ENCODE measurements at regions of chr1 and their contacts with region 1.

Region 1: DNA sequence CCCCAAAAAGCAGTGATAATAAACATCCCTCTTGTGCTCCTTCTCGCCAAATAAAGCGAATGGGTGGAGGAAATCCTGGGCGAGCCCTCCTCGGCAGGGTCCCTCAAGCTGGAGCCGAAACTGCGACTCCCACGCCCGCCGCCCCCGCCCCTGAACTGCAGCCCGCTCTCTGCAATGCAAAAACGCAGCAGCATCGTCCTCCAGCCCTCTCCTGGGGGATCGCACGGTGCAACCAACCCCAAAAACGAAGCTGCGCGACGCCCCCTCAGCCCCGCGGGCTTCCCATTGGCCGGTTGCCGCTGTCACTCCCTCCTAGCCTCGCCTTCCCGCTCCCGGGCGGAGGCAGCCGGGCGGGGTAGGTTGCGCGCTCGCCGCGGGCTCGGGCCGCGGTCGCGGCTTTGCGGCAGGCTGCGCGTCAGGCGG is at the start of gene TMCC2:
- DNase-seq: peak; percentile 91
- H3K4me3 Mint-ChIP-seq: peak within 1 kb of the TSS; percentile 63
- H3K27ac Mint-ChIP-seq: no peak within 1 kb of the TSS
- H3K4me1 Mint-ChIP-seq: peaks cover 20% of the 10 kb centered on the region
- H3K27me3 Mint-ChIP-seq: no peaks in the 10 kb centered on the region
- CTCF ChIP-seq: no peak
- total RNA-seq, gene TMCC2: 0.54 and 0.79 TPM in 2 replicates

Region 2: GRCh38 chr1:205172729-205173366 is 54.7 kb before region 1 on chr1:
- CTCF ChIA-PET with region 1: interaction called, 15 read pairs
- POLR2A ChIA-PET with region 1: interaction called, 16 read pairs
- intact Hi-C with region 1: loop called (anchors 1 kb)
- DNase-seq: peak; percentile 93
- H3K4me3 Mint-ChIP-seq: no peak overlapping the region
- H3K27ac Mint-ChIP-seq: peak overlapping the region; percentile 95
- H3K4me1 Mint-ChIP-seq: peaks cover 15% of the 10 kb centered on the region
- H3K27me3 Mint-ChIP-seq: no peaks in the 10 kb centered on the region
- CTCF ChIP-seq: no peak

Region 3: GRCh38 chr1:205211169-205211838 is 16.3 kb before region 1 on chr1 and contains the start of gene DSTYK:
- CTCF ChIA-PET with region 1: interaction called, 6 read pairs
- POLR2A ChIA-PET with region 1: interaction called, 71 read pairs
- intact Hi-C with region 1: no loop called
- DNase-seq: peak; percentile 99
- H3K4me3 Mint-ChIP-seq: peak within 1 kb of the TSS; percentile 73
- H3K27ac Mint-ChIP-seq: peak within 1 kb of the TSS; percentile 94
- H3K4me1 Mint-ChIP-seq: peaks cover 12% of the 10 kb centered on the region
- H3K27me3 Mint-ChIP-seq: peaks cover 12% of the 10 kb centered on the region
- CTCF ChIP-seq: no peak
- total RNA-seq, gene DSTYK: 18.4 and 21.5 TPM in 2 replicates

Region 4: DNA sequence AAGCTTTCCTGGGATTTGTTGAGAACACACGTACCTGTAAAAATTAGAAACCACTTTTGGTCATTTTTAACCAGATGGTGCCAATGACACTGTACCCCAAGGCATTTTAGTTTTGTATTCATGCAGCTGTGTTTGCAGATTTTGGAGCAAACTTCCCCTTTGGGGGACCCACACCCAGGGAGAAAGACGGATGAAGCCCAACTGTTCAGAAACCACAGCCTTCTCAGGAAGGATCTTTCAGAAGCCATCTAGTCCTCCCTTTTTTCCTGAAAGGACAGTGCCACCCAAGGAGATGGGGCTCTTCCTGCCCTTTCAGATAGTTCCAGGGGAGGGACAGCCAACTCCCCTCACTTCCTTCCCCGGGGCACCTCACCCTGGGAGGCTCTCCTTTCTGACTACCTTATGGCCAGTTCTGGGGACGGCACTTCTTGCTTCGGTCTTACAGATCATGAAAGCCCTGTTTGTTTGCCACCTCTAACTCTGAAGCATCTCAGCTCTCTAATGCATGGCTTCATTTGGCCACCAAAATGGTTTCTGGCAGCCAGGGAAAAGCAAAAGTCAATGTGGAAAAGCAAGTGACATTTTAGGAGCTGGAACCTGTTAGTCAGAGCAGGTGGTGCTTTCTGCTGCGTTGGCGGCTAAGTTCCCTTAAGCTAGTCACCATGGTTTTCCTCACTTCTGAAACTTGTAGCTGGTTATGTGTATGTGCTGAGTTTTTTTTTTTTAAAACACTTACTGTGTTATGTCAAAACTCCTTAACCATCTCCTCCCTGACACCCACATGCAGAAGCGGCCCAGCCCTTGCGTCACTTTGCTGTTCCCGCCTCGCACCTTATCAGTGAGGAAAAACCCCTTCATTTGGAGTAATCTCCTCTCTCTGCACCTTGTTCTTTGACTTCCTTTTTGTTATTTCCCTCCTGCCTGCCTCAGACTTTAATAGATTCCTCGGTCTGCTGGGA is 10.2 kb after region 1 on chr1:
- CTCF ChIA-PET with region 1: interaction called, 45 read pairs
- POLR2A ChIA-PET with region 1: interaction called, 11 read pairs
- intact Hi-C with region 1: no loop called
- DNase-seq: no peak
- H3K4me3 Mint-ChIP-seq: no peak overlapping the region
- H3K27ac Mint-ChIP-seq: no peak overlapping the region
- H3K4me1 Mint-ChIP-seq: no peaks in the 10 kb centered on the region
- H3K27me3 Mint-ChIP-seq: peaks cover 15% of the 10 kb centered on the region
- CTCF ChIP-seq: no peak

Region 5: DNA sequence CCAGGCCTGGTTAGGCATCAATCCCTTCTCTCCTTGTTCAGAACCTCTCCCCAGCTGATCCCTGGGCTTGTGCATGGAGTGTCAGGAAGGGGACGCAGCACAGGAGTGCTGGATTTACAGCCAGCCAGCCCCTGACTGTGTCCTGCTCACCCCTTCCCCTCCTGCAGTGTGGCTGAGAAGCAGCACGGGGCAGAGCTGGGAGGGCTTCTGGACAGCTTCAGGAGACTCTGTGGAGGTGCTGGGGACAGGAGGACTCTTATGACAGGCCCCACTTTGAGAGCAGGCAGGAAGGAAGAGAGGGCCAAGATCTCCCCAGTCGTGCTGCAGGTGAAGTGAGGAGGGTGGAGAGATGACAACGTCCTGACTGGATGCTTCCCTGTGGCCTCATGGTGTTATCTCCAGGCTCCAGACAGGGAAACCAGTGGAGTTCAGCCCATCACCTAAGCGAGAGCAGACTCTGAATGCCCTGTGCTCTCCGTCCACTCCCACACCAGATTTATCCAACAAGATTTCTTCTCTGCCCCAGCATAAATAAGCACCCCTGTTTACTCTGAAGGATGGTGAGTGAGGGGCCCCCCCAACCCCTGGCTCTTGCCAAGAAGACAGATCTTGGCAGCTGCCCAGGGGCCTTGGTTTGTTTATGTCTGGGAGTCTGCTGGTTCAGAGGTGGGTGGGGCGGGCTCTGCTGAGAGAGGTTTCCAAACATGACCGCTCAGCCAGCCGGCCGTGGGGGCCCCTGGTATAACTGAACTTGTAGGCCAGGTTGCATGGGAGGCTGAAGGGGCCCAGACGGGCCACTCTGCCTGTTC is 21.4 kb after region 1 on chr1:
- CTCF ChIA-PET with region 1: interaction called, 487 read pairs
- POLR2A ChIA-PET with region 1: interaction called, 121 read pairs
- intact Hi-C with region 1: loop called (anchors 2 kb)
- DNase-seq: peak; percentile 69
- H3K4me3 Mint-ChIP-seq: no peak overlapping the region
- H3K27ac Mint-ChIP-seq: no peak overlapping the region
- H3K4me1 Mint-ChIP-seq: peaks cover 11% of the 10 kb centered on the region
- H3K27me3 Mint-ChIP-seq: no peaks in the 10 kb centered on the region
- CTCF ChIP-seq: no peak

Region 6: DNA sequence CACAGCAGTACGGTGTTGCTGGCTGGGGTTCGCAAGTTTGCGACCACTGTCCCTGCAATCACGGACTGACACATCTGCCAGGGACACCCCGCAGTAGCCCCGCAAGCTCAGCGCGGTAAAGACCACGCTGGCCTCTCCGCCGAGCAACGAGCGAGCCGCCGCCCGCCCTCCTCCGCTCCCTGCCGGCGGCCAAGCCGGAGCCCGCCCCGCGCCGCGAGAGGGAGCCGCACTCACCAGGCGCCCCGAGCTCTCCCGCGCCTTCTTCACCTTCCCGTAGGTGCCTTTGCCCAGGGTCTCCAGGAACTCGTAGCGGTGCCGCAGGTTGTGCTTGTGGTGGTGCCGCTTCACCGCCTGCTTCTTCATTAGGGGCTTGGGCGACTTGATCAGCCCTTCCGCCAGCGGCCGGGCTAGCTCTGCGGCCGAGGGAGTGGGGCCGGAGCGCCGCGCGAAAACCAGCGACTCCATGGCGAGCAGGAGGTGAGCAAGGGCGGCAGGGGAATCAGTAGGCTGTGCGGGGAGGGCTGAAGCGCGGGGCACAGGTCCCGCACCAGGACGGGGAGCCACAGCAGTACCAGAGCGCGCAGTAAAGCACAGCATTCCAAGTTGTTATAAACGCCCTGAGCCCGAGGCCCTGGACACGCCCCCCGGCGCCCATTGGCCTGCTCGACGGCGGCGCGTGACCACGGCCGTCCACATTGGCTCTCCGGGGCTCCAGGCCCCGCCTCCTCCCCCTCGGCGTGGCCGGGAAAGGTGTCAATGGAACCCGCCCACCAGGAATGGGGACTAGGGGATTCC is 93.8 kb after region 1 on chr1 and contains the start of gene NUAK2:
- CTCF ChIA-PET with region 1: interaction called, 11 read pairs
- POLR2A ChIA-PET with region 1: interaction called, 33 read pairs
- intact Hi-C with region 1: loop called (anchors 2 kb)
- DNase-seq: peak; percentile 97
- H3K4me3 Mint-ChIP-seq: peak within 1 kb of the TSS; percentile 99
- H3K27ac Mint-ChIP-seq: peak within 1 kb of the TSS; percentile 54
- H3K4me1 Mint-ChIP-seq: peaks cover 56% of the 10 kb centered on the region
- H3K27me3 Mint-ChIP-seq: no peaks in the 10 kb centered on the region
- CTCF ChIP-seq: peak; percentile 64
- total RNA-seq, gene NUAK2: 2.8 and 6.0 TPM in 2 replicates

Measured in MCF 10A (cell line).